ENCODE measurements at regions of chr6 and their contacts with region 1.

Region 1: GRCh38 chr6:139375232-139376016 is 976 bp upstream of the CITED2 start:
- DNase-seq: peak; percentile 93
- ATAC-seq: peak; percentile 84

Region 2: GRCh38 chr6:139881728-139882211 is 506.3 kb after region 1 on chr6:
- intact Hi-C with region 1: loop called (anchors 10 kb)
- DNase-seq: peak; percentile 32
- ATAC-seq: peak; percentile 77

Region 3: DNA sequence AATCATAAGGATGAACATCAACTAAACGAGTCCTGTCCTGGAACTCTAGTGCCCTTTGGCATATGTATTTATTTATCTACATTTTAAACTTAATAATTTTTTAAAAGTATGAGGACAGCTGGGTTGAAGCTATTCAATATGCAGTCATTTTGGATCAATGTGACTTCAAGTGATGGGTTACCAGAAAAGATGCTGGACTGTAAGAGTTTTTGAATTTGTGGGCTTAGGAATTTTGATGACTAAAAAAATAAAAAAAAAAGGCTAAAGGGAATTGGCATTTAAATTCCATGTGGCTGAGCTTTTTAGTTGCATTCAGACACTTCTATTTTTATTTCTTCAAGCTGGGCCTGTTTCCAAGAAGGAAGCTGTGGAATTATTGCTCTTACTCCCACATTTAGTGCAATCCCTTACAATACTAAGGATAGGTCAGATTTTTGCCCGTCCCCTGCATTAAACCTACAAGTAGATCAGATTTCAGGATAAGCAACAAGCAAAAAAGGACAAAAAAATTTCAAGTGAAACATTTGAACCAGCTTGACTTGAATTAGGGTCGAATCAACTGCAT is 703.2 kb after region 1 on chr6:
- intact Hi-C with region 1: loop called (anchors 10 kb)
- DNase-seq: no peak
- ATAC-seq: peak; percentile 68

Region 4: GRCh38 chr6:140441256-140441655 is 1065.8 kb after region 1 on chr6:
- intact Hi-C with region 1: loop called (anchors 5 kb)
- DNase-seq: peak; percentile 64
- ATAC-seq: peak; percentile 95